Body of pancreas (tissue), 4 donors: ENCODE measurements at regions of chr3 and their contacts with region 1.

Region 1: DNA sequence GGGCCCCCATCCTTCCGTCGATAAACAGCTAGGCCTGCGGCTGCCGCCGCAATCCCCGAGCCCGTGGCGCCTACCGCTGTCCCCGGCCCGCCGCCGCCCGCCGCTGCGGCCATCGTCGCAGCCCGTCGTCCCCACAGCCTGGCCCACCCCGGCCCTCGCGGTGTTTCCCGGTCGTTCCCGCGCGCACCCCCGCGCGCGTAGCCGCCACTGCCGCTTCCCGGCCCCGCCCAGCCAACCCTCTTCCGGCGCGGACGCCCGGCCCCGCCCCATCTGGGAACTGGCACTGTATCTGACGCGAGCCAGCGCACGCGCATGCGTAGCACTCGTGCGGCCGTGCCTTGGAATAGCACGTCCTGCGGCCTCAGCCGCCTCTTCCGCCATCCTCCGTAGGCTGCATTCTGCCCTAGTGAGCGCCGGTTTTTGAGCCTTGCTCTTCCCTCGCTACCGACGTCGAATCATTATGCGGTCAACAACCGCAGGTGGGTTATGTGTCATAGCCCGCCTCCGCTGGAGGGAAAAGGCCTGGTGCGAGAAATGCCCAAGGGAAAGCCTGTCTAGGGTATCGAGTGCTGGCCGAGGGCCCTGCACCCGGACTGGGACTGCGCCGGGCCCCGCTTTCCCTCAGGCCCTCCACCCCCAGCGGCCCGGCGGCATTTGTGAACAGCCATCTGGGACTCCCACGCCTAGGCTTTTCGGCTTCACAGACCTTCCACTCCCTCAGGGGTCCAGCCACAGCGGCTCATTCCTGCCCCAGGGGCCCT is at the start of gene SMARCC1:
- DNase-seq: peak; percentile 98 to 99 (median 98)
- ATAC-seq: peak; percentile 97
- H3K4me3 ChIP-seq: peak within 1 kb of the TSS; percentile 58 to 80
- H3K27ac ChIP-seq: peak within 1 kb of the TSS; percentile 93 to 98 (median 95)
- H3K4me1 ChIP-seq: peaks cover 23% of the 10 kb centered on the region
- H3K27me3 ChIP-seq: no peaks in the 10 kb centered on the region
- CTCF ChIP-seq: peak in 3 of 7 experiments; percentile 27 to 33 (median 30)
- POLR2A ChIP-seq: peak; percentile 89 to 97 (median 96)
- total RNA-seq, gene SMARCC1: 25.9 to 34.3 TPM

Region 2: DNA sequence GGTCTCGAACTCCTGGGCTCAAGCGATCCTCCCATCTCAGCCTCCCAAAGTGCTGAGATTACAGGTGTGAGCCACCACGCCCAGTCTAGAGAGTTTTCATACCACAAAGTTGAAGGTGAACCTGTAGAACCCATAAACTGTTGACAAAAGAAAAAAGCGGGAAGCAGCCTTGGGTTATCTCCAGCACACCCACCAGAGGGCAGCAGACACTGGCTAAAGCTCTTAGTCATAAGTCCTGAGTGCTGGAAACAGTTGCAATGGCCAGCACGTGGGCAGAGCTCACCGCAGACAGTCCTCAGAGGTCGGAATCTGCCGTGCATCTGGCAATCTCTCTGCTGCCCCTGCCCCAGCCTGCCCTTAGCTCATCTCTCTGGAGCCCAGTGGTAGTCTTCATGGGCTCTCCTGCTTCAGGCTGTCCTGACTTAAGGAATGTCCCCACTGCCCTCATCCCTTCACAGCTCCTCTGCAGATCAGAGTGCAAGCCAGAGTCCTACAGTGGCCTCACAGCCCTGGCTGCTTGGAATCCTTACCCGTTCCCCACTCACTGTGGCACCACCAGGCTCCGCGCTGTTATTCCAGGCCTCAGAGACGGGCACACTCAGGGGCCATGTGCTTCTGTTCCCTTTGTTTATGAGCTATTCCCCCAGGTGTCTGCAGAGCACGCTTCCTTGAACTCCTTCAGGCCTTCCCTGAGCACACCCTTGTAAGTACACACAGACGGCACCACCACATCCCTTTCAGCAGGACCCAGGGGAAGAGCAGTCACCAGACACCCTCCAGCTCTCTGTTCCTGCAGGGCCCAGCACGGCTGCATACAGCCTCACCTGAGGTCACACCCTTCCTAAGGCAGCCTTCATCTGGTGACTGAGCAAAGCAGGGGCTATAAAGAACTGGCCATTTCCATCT is 259.5 kb before region 1 on chr3:
- intact Hi-C with region 1: loop called (anchors 5 kb)
- DNase-seq: peak; percentile 85 to 88 (median 86)
- ATAC-seq: peak; percentile 94
- H3K4me3 ChIP-seq: no peak overlapping the region
- H3K27ac ChIP-seq: no peak overlapping the region
- H3K4me1 ChIP-seq: peaks cover 5% of the 10 kb centered on the region
- H3K27me3 ChIP-seq: no peaks in the 10 kb centered on the region
- CTCF ChIP-seq: peak; percentile 73 to 97 (median 96)
- POLR2A ChIP-seq: no peak

Region 3: DNA sequence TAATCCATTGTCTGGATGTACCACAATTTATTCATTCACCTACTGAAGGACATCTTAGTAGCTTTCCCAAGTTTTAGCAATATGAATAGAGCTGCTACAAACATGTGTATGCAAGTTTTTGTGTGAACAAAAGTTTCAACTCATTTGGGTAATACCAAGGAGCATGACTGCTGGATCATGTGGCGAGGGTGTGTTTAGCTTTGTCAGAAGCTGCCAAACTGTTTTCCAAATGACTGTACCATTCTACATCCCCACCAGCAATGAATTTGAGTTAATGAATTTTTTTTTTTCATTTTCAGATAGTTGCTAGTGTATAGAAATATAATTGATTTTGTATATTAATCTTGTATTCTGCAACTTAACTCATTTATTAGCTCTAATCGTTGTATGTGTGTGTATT is 248.4 kb before region 1 on chr3:
- intact Hi-C with region 1: no loop called
- DNase-seq: no peak
- ATAC-seq: no peak
- H3K4me3 ChIP-seq: no peak overlapping the region
- H3K27ac ChIP-seq: no peak overlapping the region
- H3K4me1 ChIP-seq: no peaks in the 10 kb centered on the region
- H3K27me3 ChIP-seq: no peaks in the 10 kb centered on the region
- CTCF ChIP-seq: no peak
- POLR2A ChIP-seq: no peak

Region 4: GRCh38 chr3:47766186-47766585 is 15.7 kb before region 1 on chr3:
- intact Hi-C with region 1: no loop called
- DNase-seq: no peak
- ATAC-seq: no peak
- H3K4me3 ChIP-seq: no peak overlapping the region
- H3K27ac ChIP-seq: no peak overlapping the region
- H3K4me1 ChIP-seq: no peaks in the 10 kb centered on the region
- H3K27me3 ChIP-seq: no peaks in the 10 kb centered on the region
- CTCF ChIP-seq: no peak
- POLR2A ChIP-seq: no peak